Activated CD4-positive, alpha-beta T cell treated with anti-CD3 and anti-CD28 coated beads for 36 hours (primary cell): ENCODE measurements at regions of chr13 and their contacts with region 1.

Region 1: DNA sequence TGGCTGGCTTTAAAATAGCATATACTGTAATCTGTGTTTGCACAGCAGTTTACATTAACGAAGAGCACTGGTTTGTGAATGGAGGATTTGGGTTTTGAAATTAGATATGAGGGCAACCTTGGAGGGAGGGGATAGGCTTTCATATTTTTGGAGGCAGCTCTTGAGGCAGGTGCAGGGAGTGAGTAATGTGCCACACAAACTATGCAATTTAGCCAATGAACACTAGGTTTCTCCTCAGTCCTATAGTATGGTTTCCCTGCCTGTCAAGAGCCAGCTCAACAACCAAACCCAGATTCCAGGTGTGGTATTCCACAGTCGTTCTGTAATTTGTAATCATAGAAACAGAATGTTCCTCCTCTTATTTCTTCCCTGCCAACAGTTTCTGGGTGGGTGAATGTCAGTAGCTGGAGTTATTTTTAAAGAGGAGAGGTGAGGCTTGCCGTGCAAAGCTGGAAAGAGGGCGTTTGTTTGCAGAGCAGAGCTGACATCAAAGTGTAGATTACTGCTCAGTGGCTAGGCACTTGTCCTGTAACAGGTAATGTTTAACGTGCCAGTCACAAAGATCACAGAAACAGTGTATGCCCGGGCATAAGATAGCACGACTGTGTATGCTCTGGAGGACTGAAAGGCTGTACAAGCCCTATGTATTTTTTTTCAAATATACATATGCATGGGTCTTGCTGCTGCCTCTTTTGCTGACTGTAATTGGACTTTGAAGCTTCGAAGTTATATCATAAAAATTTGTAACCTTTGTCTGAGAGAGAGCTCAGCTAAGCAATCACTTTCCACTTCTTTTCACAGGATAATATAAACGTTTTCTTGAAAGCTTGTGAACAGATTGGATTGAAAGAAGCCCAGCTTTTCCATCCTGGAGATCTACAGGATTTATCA is 124.2 kb downstream of the LMO7 start:
- DNase-seq: peak; percentile 16
- ATAC-seq: peak; percentile 74
- H3K4me3 Mint-ChIP-seq: peak overlapping the region; percentile 60
- H3K27ac Mint-ChIP-seq: peak overlapping the region; percentile 77
- H3K4me1 Mint-ChIP-seq: peaks cover 71% of the 10 kb centered on the region
- H3K27me3 Mint-ChIP-seq: no peaks in the 10 kb centered on the region

Region 2: GRCh38 chr13:75482070-75482819 is 278.1 kb before region 1 on chr13 and contains the start of gene TBC1D4:
- CTCF ChIA-PET with region 1: interaction called, 6 read pairs
- POLR2A ChIA-PET with region 1: no interaction called
- intact Hi-C with region 1: loop called in 1 of 2 experiments (anchors 5 kb)
- DNase-seq: peak; percentile 80
- ATAC-seq: peak; percentile 74
- H3K4me3 Mint-ChIP-seq: peak within 1 kb of the TSS; percentile 85
- H3K27ac Mint-ChIP-seq: peak within 1 kb of the TSS; percentile 33
- H3K4me1 Mint-ChIP-seq: peaks cover 20% of the 10 kb centered on the region
- H3K27me3 Mint-ChIP-seq: peaks cover 44% of the 10 kb centered on the region
- total RNA-seq, gene TBC1D4: 29.4 to 31.7 TPM

Region 3: GRCh38 chr13:75635828-75636435 is 124.4 kb before region 1 on chr13 and contains the start of gene LMO7:
- CTCF ChIA-PET with region 1: no interaction called
- POLR2A ChIA-PET with region 1: no interaction called
- intact Hi-C with region 1: loop called in 1 of 2 experiments (anchors 5 kb)
- DNase-seq: peak; percentile 63
- ATAC-seq: peak; percentile 49
- H3K4me3 Mint-ChIP-seq: peak within 1 kb of the TSS; percentile 69
- H3K27ac Mint-ChIP-seq: no peak within 1 kb of the TSS
- H3K4me1 Mint-ChIP-seq: peaks cover 13% of the 10 kb centered on the region
- H3K27me3 Mint-ChIP-seq: peaks cover 18% of the 10 kb centered on the region
- total RNA-seq, gene LMO7: 11.7 to 15.5 TPM

Region 4: GRCh38 chr13:75704579-75705320 is 55.6 kb before region 1 on chr13:
- CTCF ChIA-PET with region 1: no interaction called
- POLR2A ChIA-PET with region 1: no interaction called
- intact Hi-C with region 1: loop called (anchors 1 kb)
- DNase-seq: no peak
- ATAC-seq: no peak
- H3K4me3 Mint-ChIP-seq: no peak overlapping the region
- H3K27ac Mint-ChIP-seq: no peak overlapping the region
- H3K4me1 Mint-ChIP-seq: peaks cover 16% of the 10 kb centered on the region
- H3K27me3 Mint-ChIP-seq: no peaks in the 10 kb centered on the region

Region 5: GRCh38 chr13:75803164-75803611 is 42.8 kb after region 1 on chr13:
- CTCF ChIA-PET with region 1: interaction called, 10 read pairs
- POLR2A ChIA-PET with region 1: no interaction called
- intact Hi-C with region 1: loop called (anchors 1 kb)
- DNase-seq: peak; percentile 24
- ATAC-seq: peak; percentile 43
- H3K4me3 Mint-ChIP-seq: no peak overlapping the region
- H3K27ac Mint-ChIP-seq: peak overlapping the region; percentile 55
- H3K4me1 Mint-ChIP-seq: peaks cover 55% of the 10 kb centered on the region
- H3K27me3 Mint-ChIP-seq: no peaks in the 10 kb centered on the region

Region 6: DNA sequence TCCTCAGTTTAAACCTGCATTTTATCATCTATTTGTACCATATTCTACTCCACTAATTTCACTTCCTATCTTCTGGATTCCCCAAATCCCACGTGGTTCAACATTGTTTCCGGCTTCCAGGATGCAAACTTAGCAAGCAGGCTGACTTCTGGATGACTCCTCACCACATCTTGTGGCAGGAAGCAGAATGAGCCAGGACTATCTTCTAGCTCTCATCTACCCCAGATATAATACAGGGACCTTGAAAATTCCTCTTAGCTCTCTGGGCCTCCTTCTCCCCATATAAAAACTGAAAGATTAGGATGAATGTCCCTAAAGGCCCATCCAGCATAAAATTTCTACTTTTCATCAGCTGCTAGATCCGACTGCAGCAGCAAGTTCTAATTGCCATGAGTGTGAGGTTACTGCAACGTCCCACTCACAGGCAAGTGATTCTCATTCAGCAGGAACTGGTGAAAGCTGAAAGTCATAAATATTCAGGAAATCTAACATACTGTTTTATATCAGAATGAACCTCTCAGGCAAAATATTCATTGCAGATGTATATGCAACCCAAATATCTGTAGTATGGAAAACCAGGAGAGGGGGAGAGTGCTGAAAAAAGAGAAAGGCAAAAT is 1032.5 kb after region 1 on chr13:
- CTCF ChIA-PET with region 1: no interaction called
- POLR2A ChIA-PET with region 1: no interaction called
- intact Hi-C with region 1: no loop called
- DNase-seq: no peak
- ATAC-seq: no peak
- H3K4me3 Mint-ChIP-seq: no peak overlapping the region
- H3K27ac Mint-ChIP-seq: no peak overlapping the region
- H3K4me1 Mint-ChIP-seq: no peaks in the 10 kb centered on the region
- H3K27me3 Mint-ChIP-seq: no peaks in the 10 kb centered on the region

Region 7: DNA sequence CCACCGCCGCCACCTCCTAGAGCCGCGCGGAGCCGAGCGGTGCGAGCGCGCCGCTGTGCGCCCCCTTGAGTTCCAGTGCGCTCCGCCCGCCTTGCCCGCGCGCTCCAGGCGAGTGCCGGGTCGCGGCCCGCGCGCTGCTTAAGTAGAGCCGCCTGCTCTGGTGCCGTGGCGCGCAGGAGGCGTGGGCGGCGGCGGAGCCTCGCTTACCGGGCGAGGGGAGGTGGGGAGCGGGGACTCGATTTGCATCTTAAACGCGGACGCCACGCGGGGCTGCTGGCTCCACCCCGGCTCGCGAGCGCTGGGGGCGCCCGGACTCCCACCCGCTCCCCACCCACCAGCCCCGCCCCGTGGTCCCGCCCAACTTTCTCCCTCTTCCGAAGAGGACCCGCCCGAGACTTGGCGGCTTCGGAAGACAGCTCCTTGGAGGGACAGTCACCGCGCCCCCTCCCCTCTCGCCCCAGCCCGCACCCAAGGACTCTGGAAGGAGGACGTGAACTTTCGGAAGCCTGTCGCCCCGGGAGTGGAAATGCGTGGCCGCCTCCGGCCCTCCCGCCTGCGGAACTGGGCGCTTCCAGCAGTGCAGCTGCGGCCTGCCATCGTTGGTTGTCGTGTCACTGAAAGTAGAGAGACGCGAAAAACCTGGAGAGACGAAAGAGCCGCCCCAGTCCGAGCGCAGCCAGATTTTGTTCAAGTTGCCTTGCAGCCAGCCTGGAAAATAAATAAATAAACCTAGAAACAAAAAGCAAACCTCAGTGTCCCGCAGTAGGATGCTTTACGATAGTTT is 1126.1 kb after region 1 on chr13 and contains the start of gene KCTD12:
- CTCF ChIA-PET with region 1: no interaction called
- POLR2A ChIA-PET with region 1: no interaction called
- intact Hi-C with region 1: loop called in 1 of 2 experiments (anchors 5 kb)
- DNase-seq: peak; percentile 86
- ATAC-seq: peak; percentile 78
- H3K4me3 Mint-ChIP-seq: peak within 1 kb of the TSS; percentile 93
- H3K27ac Mint-ChIP-seq: peak within 1 kb of the TSS; percentile 90
- H3K4me1 Mint-ChIP-seq: peaks cover 29% of the 10 kb centered on the region
- H3K27me3 Mint-ChIP-seq: peaks cover 8% of the 10 kb centered on the region
- total RNA-seq, gene KCTD12: 9.9 to 11.1 TPM